ENCODE measurements at regions of chr2 and their contacts with region 1.

Region 1: DNA sequence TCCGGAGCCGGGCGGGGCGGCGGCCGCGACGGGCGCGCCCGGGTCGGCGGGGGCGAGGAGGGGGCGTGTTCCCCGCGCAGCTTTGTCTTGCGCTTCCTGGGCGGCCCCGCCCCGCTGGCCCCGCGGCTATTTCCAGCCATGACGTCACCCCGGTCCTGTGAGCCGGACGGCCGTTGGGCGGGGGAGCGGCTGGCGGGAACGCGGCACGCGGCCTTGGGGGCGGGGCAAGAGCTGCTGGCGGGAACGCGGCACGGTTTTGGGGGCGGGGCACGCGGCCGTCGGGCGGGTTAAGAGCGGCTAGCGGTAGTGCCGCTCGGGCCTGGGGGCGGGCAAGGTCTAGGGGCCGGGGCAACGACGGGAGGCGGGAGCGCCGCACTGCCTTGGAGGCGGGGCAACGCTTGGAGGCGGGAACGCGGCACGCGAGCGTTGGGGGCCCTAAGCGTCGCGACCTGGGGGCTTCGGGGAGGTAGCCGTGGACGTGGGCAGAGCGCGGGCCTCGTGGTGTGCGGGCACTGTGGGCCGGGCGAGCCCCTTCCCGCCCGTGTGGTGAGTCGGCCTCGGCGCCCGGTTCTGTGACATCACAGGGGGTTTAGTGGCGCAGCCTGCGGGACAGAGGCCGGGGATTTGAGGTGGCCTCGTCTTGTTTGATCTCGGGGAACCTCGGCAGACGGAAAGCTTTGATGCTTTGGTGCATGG is 704 bp downstream of the KLF11 start:
- DNase-seq: peak; percentile 86
- ATAC-seq: peak; percentile 58
- H3K4me3 ChIP-seq: peak overlapping the region; percentile 62
- H3K27ac ChIP-seq: no peak overlapping the region; the same call in 1 of the 2 replicates
- H3K4me1 ChIP-seq: peaks cover 1% of the 10 kb centered on the region; the same call in 1 of the 2 replicates
- H3K27me3 ChIP-seq: no peaks in the 10 kb centered on the region
- CTCF ChIP-seq: no peak
- POLR2A ChIP-seq: no peak
- RAD21 ChIP-seq: no peak

Region 2: GRCh38 chr2:9565436-9566153 is 478.5 kb before region 1 on chr2:
- CTCF ChIA-PET with region 1: no interaction called
- POLR2A ChIA-PET with region 1: no interaction called
- dilution Hi-C with region 1: no loop called
- in situ Hi-C with region 1: loop called (anchors 10 kb)
- intact Hi-C with region 1: no loop called
- DNase-seq: peak; percentile 96
- ATAC-seq: peak; percentile 99
- H3K4me3 ChIP-seq: no peak overlapping the region
- H3K27ac ChIP-seq: peak overlapping the region; percentile 78
- H3K4me1 ChIP-seq: peaks cover 8% of the 10 kb centered on the region
- H3K27me3 ChIP-seq: no peaks in the 10 kb centered on the region
- CTCF ChIP-seq: no peak
- POLR2A ChIP-seq: peak; percentile 45; the same call in 1 of the 2 replicates
- RAD21 ChIP-seq: peak; percentile 29; the same call in 1 of the 2 replicates

Region 3: DNA sequence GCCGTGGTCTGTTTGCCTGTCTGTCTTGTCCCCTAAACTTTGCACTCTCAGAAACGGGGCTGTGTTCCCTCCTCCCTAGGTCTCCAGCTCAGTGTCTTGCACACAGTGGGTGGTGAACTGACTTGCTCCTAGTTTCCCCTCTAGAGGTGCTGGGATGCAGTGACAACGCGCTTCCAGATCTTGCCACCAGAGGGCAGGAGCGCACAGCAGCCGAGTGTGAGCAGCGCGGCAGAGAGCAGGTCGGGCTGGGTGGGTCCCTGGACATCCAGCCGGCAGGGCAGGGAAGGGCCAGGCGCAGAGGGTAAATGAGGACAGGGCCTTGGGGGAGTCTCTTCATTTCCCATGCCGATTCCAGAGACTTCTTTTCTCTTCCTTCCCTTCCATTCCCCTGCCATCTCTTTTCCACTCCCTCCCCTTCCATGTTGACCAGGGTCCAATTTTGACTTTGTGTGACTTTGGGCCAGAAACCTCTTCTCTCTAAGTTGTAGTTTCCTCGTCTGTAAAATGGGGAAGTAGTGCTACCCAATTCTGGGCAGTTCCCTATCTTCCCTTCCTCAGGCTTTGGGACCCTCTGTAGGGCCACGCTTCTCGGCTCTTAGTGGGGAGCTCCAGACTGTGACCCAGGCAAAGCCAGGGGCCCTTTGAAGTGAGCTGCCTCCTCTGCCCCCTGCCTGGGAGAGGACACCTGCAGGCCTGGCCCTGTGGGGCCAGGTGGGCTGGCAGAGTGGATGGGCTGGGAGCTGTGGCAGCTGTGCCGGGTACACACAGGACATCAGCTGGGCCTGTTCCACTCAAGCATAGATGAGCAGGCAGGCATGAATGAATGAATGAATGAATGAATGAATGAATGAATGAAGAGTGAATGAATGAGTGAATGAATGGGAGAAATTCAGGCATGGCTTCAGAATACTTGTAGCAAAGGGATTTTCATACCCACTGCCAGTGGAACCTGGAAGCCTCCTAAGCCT is 244.1 kb before region 1 on chr2:
- CTCF ChIA-PET with region 1: interaction called, 3 read pairs
- POLR2A ChIA-PET with region 1: no interaction called
- dilution Hi-C with region 1: no loop called
- in situ Hi-C with region 1: loop called (anchors 5 kb)
- intact Hi-C with region 1: loop called (anchors 1 kb)
- DNase-seq: peak; percentile 69
- ATAC-seq: peak; percentile 86
- H3K4me3 ChIP-seq: no peak overlapping the region
- H3K27ac ChIP-seq: no peak overlapping the region
- H3K4me1 ChIP-seq: peaks cover 17% of the 10 kb centered on the region
- H3K27me3 ChIP-seq: no peaks in the 10 kb centered on the region; the same call in 1 of the 2 replicates
- CTCF ChIP-seq: peak; percentile 98
- POLR2A ChIP-seq: no peak
- RAD21 ChIP-seq: peak; percentile 95

Region 4: GRCh38 chr2:9813312-9814133 is 230.5 kb before region 1 on chr2:
- CTCF ChIA-PET with region 1: interaction called, 9 read pairs
- POLR2A ChIA-PET with region 1: no interaction called
- dilution Hi-C with region 1: no loop called
- in situ Hi-C with region 1: no loop called
- intact Hi-C with region 1: loop called (anchors 1 kb)
- DNase-seq: peak; percentile 51
- ATAC-seq: peak; percentile 99
- H3K4me3 ChIP-seq: no peak overlapping the region
- H3K27ac ChIP-seq: no peak overlapping the region
- H3K4me1 ChIP-seq: peaks cover 2% of the 10 kb centered on the region; the same call in 1 of the 2 replicates
- H3K27me3 ChIP-seq: peaks cover 3% of the 10 kb centered on the region
- CTCF ChIP-seq: peak; percentile 88
- POLR2A ChIP-seq: 0 out of 2 replicates have a peak, but pooled peaks have one; percentile 27
- RAD21 ChIP-seq: peak; percentile 86

Region 5: GRCh38 chr2:9889812-9890261 is 154.2 kb before region 1 on chr2:
- CTCF ChIA-PET with region 1: interaction called, 3 read pairs
- POLR2A ChIA-PET with region 1: no interaction called
- dilution Hi-C with region 1: no loop called
- in situ Hi-C with region 1: no loop called
- intact Hi-C with region 1: loop called (anchors 5 kb)
- DNase-seq: peak; percentile 25
- ATAC-seq: no peak
- H3K4me3 ChIP-seq: no peak overlapping the region
- H3K27ac ChIP-seq: no peak overlapping the region
- H3K4me1 ChIP-seq: no peaks in the 10 kb centered on the region
- H3K27me3 ChIP-seq: no peaks in the 10 kb centered on the region
- CTCF ChIP-seq: no peak
- POLR2A ChIP-seq: no peak
- RAD21 ChIP-seq: no peak

Region 6: DNA sequence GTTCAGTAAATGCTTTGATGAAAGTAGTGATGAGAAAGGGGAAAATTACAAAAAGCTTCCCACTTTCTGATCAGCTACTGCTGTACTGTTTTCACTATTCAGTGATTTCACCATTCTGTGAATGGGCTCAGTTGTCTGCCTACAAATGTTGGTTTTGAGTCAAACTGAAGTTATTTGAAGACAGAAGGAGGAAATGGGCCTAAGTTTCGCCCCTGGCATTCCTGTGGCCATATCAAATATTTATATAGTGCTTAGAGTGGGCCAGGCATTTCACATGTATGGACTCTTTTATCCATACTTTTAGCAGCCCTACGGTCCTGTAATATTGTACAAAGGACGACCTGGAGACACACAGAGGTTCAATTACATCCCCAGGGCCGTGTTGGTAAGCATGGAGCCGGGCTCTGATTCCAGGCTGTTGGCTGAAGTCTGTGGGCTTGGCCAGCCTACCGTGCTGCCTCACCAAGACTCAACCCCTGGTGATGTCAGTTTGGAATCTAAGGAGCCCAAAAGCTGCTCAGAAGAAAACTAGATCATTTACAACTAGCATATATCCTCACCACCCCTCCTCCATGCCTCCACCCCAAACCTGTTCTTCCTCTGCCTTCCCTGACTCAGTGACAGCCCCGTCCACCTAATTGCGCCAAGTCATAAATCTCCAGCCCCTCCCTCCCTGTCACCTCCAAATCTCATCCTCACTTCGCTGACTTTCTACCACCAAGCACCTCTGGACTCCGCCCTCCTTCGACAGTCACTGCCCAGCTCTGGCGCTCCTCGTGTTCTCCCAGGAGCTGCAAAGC is 102.7 kb before region 1 on chr2:
- CTCF ChIA-PET with region 1: no interaction called
- POLR2A ChIA-PET with region 1: no interaction called
- dilution Hi-C with region 1: no loop called
- in situ Hi-C with region 1: no loop called
- intact Hi-C with region 1: loop called (anchors 10 kb)
- DNase-seq: peak; percentile 82
- ATAC-seq: peak; percentile 87
- H3K4me3 ChIP-seq: no peak overlapping the region
- H3K27ac ChIP-seq: 0 out of 2 replicates have a peak overlapping the region, but pooled peaks have one; percentile 30
- H3K4me1 ChIP-seq: peaks cover 15% of the 10 kb centered on the region
- H3K27me3 ChIP-seq: peaks cover 6% of the 10 kb centered on the region; the same call in 1 of the 2 replicates
- CTCF ChIP-seq: no peak
- POLR2A ChIP-seq: no peak
- RAD21 ChIP-seq: no peak

Region 7: GRCh38 chr2:9984217-9984739 is 59.8 kb before region 1 on chr2:
- CTCF ChIA-PET with region 1: interaction called, 12 read pairs
- POLR2A ChIA-PET with region 1: no interaction called
- dilution Hi-C with region 1: no loop called
- in situ Hi-C with region 1: no loop called
- intact Hi-C with region 1: loop called (anchors 2 kb)
- DNase-seq: peak; percentile 48
- ATAC-seq: peak; percentile 69
- H3K4me3 ChIP-seq: no peak overlapping the region
- H3K27ac ChIP-seq: no peak overlapping the region
- H3K4me1 ChIP-seq: peaks cover 12% of the 10 kb centered on the region
- H3K27me3 ChIP-seq: no peaks in the 10 kb centered on the region
- CTCF ChIP-seq: peak; percentile 64
- POLR2A ChIP-seq: no peak
- RAD21 ChIP-seq: peak; percentile 63

Region 8: DNA sequence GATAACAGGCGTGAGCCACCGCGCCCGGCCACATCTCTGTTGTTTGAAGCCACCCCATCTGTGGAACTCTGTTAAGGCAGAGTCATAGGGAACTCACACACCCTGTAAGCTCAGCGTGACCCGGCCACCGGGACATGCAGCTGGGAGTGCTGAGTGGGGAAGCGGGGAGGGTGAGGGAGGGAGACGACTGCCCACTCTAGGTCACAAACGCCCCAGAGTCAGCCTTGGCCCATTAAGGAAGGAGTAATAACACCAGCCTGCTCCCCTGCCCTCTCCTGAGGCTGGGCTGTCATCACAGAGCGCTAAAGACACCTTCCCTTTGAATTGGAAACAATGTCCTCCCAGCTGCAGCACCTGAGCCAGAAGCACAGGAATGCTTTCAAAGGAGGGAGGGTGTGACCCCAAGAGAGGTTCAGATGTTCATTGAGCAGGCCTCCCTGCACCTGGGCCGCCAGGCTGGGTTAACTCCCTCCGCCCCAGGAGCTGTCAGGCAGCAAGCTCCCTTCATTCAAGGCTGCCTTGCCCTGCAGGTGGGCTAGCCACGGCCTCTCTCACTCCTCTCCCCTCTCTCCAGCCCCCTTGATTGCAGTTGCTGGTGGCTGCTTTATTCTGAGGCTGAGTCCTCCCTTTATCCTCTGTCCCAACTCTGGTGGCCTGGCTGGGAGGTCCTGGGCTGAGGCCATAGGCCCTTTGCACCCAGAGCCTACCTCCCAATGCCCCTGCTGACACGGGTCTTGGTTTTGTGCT is 181.4 kb after region 1 on chr2:
- CTCF ChIA-PET with region 1: no interaction called
- POLR2A ChIA-PET with region 1: no interaction called
- dilution Hi-C with region 1: no loop called
- in situ Hi-C with region 1: no loop called
- intact Hi-C with region 1: no loop called
- DNase-seq: no peak
- ATAC-seq: no peak
- H3K4me3 ChIP-seq: no peak overlapping the region
- H3K27ac ChIP-seq: no peak overlapping the region
- H3K4me1 ChIP-seq: peaks cover 8% of the 10 kb centered on the region
- H3K27me3 ChIP-seq: peaks cover 9% of the 10 kb centered on the region
- CTCF ChIP-seq: no peak
- POLR2A ChIP-seq: no peak
- RAD21 ChIP-seq: no peak